ENCODE measurements at regions of chr2 and their contacts with region 1.

Region 1: DNA sequence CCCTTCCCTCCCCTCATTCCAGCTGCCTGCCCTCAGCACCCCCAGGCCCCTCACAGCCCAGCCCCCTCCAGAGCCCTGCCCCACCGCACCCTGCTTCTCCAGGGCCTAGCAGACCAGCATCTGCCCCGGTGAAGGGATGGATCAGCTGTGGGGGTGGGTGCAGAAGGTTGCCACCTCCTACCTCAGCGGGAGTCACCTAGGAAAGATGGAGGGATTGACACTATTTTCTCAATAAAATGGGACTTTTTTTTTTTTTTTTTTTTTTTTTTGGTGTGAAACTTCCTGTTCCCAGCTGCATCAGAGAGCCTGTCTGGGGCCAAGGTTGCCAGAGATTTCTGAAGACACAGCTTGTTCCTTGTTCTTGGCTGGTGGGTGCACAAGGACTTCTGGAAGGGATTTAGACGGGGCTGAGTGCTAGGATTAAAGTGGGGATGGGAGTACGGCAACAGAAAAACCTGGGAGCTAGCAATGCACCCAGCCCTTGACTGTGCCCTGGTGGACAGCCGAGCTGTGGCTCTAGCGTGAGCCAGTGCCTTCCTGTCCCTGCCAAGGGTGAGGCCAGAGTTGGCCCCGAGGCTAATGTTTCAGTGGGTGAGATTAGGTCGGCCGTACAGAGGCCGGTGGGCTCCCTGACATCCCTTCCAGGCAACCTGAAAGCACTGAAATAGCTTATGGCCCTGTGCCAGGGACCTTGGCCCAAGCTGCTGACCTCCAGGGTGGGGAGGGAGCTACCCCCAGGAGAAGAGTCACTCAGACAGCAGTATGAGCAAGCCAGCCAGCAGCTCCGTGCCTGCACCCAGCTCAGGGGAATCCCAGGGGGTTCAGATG is 4.6 kb downstream of the B3GNT7 start:
- DNase-seq: peak; percentile 57
- H3K4me3 ChIP-seq: no peak overlapping the region
- H3K27ac ChIP-seq: no peak overlapping the region
- H3K4me1 ChIP-seq: no peaks in the 10 kb centered on the region
- H3K27me3 ChIP-seq: peaks cover 9% of the 10 kb centered on the region; the same call in 1 of the 2 replicates

Region 2: GRCh38 chr2:230124757-230125431 is 1275.2 kb before region 1 on chr2:
- in situ Hi-C with region 1: no loop called
- DNase-seq: no peak
- H3K4me3 ChIP-seq: no peak overlapping the region
- H3K27ac ChIP-seq: no peak overlapping the region
- H3K4me1 ChIP-seq: 0 out of 2 replicates have a peak, but pooled peaks cover 10% of the 10 kb centered on the region
- H3K27me3 ChIP-seq: no peaks in the 10 kb centered on the region

Region 3: DNA sequence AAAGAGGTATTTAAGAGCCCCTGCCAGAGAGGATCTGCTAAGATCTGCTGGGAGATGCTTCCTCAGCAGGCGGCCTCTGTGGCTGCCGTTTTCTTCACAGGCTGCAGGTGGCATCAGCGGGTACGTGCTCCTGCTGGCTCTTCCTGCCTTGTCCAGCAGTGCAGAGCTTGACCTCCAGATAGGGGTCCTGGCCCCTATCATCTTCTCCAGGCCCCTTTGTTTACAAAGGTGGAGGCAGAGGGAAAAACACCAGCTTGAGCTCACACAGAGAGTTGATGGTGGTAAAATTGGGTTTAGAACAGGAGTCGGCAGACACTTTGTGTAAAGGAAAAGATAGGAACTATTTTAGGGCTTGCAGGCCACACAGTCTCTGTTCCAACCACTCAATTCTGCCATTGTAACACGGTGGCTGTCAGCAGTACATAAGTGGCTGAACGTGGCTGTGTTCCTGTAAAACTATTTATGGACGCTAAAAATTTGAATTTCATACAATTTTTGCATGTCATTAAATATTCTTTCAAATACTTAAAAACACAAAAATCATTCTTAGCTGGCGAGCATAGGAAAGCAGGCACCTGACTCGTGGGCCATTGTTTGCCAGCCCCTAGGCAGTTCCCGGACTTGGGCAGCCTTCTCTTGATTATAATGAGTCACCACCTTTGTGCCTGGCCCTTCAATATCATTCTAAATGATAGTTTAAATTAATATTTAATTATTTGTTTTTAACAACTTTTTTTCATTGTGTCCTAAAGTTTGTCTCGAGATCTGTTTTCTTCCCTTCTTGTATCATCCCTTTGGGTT is 102.8 kb before region 1 on chr2:
- in situ Hi-C with region 1: loop called (anchors 10 kb)
- DNase-seq: peak; percentile 74
- H3K4me3 ChIP-seq: no peak overlapping the region
- H3K27ac ChIP-seq: no peak overlapping the region
- H3K4me1 ChIP-seq: no peaks in the 10 kb centered on the region
- H3K27me3 ChIP-seq: no peaks in the 10 kb centered on the region

Measured in GM23248 (cell line).